CD8-positive, alpha-beta memory T cell (primary cell): ENCODE measurements at regions of chr3 and their contacts with region 1.

Region 1: GRCh38 chr3:111717601-111718000 is 122.5 kb upstream of the ZBED2 start:
- DNase-seq: peak; percentile 43 to 79 (median 55)
- H3K4me3 ChIP-seq: no peak overlapping the region
- H3K4me3 Mint-ChIP-seq: no peak overlapping the region
- H3K27ac ChIP-seq: no peak overlapping the region
- H3K27ac Mint-ChIP-seq: peak overlapping the region in 4 of 8 donors; percentile 77 to 95 (median 78)
- H3K4me1 ChIP-seq: no peaks in the 10 kb centered on the region
- H3K4me1 Mint-ChIP-seq: peaks cover 5 to 15% (median 12%) of the 10 kb centered on the region in 3 donors
- H3K27me3 ChIP-seq: no peaks in the 10 kb centered on the region
- H3K27me3 Mint-ChIP-seq: no peaks in the 10 kb centered on the region

Region 2: GRCh38 chr3:111604119-111604518 is 113.5 kb before region 1 on chr3:
- CTCF ChIA-PET with region 1: no interaction called
- POLR2A ChIA-PET with region 1: no interaction called
- DNase-seq: no peak
- H3K4me3 ChIP-seq: no peak overlapping the region
- H3K4me3 Mint-ChIP-seq: no peak overlapping the region
- H3K27ac ChIP-seq: no peak overlapping the region
- H3K27ac Mint-ChIP-seq: peak overlapping the region; percentile 34 to 93 (median 65)
- H3K4me1 ChIP-seq: peaks cover 19% of the 10 kb centered on the region
- H3K4me1 Mint-ChIP-seq: peaks cover 54 to 77% (median 76%) of the 10 kb centered on the region in 3 donors
- H3K27me3 ChIP-seq: no peaks in the 10 kb centered on the region
- H3K27me3 Mint-ChIP-seq: no peaks in the 10 kb centered on the region

Region 3: GRCh38 chr3:111668912-111669488 is 48.6 kb before region 1 on chr3:
- CTCF ChIA-PET with region 1: interaction called, 56 read pairs
- POLR2A ChIA-PET with region 1: interaction called, 3 read pairs
- DNase-seq: peak in 2 of 5 donors; percentile 53 to 59
- H3K4me3 ChIP-seq: no peak overlapping the region
- H3K4me3 Mint-ChIP-seq: peak overlapping the region in 4 of 7 donors; percentile 3 to 46 (median 13)
- H3K27ac ChIP-seq: no peak overlapping the region
- H3K27ac Mint-ChIP-seq: peak overlapping the region; percentile 46 to 91 (median 72)
- H3K4me1 ChIP-seq: peaks cover 62% of the 10 kb centered on the region
- H3K4me1 Mint-ChIP-seq: peaks cover 65 to 88% (median 82%) of the 10 kb centered on the region in 3 donors
- H3K27me3 ChIP-seq: no peaks in the 10 kb centered on the region
- H3K27me3 Mint-ChIP-seq: no peaks in the 10 kb centered on the region

Region 4: DNA sequence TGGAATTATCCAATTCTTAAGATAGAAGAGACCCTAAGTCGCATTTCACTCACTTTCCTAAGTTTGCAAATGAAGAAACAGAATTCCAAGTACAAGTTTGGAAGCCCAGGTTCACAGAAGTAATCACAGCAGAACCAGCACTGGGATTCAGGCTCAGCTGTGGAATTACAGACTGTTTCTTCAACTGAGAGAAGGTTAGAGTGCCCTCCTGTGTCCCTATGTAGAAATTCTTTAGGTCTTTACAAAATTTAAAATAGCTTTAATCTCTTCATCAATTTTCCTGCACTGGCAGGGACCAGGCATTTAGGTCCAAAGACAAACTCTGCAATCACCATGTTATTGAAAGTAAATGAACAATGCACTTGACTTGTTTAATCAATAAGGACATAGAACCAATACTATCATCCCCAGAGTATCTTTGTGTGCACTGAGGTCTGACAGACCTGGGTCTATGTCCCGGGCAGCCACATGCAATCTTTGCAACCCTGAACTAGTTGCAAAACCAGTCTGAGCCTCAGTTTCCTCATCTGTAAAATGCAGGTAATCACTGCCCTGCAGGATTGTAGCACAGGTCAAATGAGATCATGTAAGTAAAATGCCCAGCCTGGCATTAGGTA is 26.2 kb before region 1 on chr3:
- CTCF ChIA-PET with region 1: interaction called, 15 read pairs
- POLR2A ChIA-PET with region 1: no interaction called
- DNase-seq: peak in 1 of 5 donors; percentile 36
- H3K4me3 ChIP-seq: no peak overlapping the region
- H3K4me3 Mint-ChIP-seq: no peak overlapping the region
- H3K27ac ChIP-seq: no peak overlapping the region
- H3K27ac Mint-ChIP-seq: peak overlapping the region in 3 of 8 donors; percentile 14 to 35 (median 31)
- H3K4me1 ChIP-seq: peaks cover 15% of the 10 kb centered on the region
- H3K4me1 Mint-ChIP-seq: peaks cover 60 to 86% (median 82%) of the 10 kb centered on the region in 3 donors
- H3K27me3 ChIP-seq: no peaks in the 10 kb centered on the region
- H3K27me3 Mint-ChIP-seq: no peaks in the 10 kb centered on the region

Region 5: DNA sequence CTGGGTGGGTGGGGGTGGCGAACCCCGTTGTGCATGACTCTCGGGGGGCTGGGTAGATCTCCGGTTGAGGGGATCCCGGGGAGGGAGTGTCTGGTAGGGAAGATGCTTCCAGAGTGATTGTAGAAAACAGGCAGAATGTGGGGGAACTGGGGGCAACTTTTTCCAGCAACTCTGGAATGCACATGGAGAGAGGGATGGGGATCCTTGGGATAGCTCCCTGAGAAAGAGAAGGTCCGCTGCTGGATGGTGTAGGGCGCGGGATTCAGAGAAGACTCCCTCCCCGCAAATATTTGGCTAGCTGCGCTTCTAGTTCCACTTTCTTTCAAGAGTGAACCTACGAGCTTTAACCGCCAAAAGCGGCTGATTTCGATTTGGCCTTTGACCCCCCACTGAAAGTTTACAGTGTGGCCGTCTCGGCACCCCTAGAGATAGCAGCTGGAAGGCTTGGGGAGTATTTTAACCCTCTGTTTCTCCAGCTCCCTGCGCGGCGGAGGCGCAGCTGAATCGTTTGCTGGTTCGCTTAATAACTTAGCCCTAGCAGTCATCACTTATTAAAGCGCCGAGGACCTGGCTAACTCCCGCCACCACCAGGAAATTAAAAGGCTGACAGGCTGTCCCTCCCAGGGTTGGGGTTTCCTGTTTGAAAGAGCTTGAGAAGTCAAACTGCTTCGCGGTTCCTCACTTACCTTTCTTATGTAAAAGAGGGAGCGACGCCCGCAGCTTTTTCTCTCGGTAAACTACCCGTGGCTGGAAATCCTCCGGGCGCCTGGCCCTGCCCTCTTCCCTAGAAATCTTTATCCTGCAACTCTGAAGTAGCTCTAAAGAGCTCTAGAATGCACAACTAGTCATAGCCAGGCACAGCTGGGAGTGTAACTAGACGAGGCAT is 142.6 kb after region 1 on chr3:
- CTCF ChIA-PET with region 1: interaction called, 42 read pairs
- POLR2A ChIA-PET with region 1: interaction called, 4 read pairs
- DNase-seq: peak; percentile 45 to 78 (median 50)
- H3K4me3 ChIP-seq: peak overlapping the region; percentile 78
- H3K4me3 Mint-ChIP-seq: peak overlapping the region; percentile 94 to 99 (median 97)
- H3K27ac ChIP-seq: peak overlapping the region; percentile 61
- H3K27ac Mint-ChIP-seq: peak overlapping the region; percentile 87 to 96 (median 94)
- H3K4me1 ChIP-seq: peaks cover 6% of the 10 kb centered on the region
- H3K4me1 Mint-ChIP-seq: peaks cover 32 to 42% (median 41%) of the 10 kb centered on the region in 3 donors
- H3K27me3 ChIP-seq: peaks cover 5% of the 10 kb centered on the region
- H3K27me3 Mint-ChIP-seq: peaks cover 0 to 2% of the 10 kb centered on the region in 2 donors

Region 6: DNA sequence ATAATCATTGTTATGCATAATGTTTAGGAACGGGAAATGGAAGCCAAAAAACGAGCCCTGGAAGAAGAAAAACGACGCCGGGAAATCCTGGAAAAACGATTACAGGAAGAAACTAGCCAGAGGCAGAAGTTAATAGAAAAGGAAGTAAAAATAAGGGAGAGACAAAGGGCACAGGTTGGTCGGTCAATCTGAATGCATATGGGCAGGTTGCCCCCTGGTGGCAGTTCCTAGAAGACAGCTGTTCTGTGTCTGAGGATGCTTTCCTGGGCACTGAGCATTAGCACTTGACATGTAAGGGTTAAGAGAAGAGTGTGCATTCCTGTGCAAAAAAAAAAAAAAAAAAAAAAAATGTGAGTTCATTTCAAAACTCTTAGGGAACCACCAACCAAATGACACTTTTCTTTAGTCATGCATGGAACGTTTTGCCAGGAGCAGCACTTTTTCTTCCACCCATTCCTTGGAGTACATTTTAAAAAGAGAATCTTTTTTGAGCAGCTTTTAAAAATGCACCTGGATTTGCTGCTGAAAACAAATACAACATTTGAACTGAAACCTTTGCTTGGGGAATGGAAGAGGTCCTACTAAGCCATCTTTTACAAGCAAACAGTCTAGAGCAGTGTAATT is 250.2 kb after region 1 on chr3:
- CTCF ChIA-PET with region 1: interaction called, 190 read pairs
- POLR2A ChIA-PET with region 1: no interaction called
- DNase-seq: peak; percentile 61 to 84 (median 67)
- H3K4me3 ChIP-seq: no peak overlapping the region
- H3K4me3 Mint-ChIP-seq: no peak overlapping the region
- H3K27ac ChIP-seq: no peak overlapping the region
- H3K27ac Mint-ChIP-seq: peak overlapping the region in 3 of 8 donors; percentile 7 to 8 (median 7)
- H3K4me1 ChIP-seq: peaks cover 3% of the 10 kb centered on the region
- H3K4me1 Mint-ChIP-seq: peaks cover 3 to 9% (median 4%) of the 10 kb centered on the region in 3 donors
- H3K27me3 ChIP-seq: no peaks in the 10 kb centered on the region
- H3K27me3 Mint-ChIP-seq: no peaks in the 10 kb centered on the region

Region 7: DNA sequence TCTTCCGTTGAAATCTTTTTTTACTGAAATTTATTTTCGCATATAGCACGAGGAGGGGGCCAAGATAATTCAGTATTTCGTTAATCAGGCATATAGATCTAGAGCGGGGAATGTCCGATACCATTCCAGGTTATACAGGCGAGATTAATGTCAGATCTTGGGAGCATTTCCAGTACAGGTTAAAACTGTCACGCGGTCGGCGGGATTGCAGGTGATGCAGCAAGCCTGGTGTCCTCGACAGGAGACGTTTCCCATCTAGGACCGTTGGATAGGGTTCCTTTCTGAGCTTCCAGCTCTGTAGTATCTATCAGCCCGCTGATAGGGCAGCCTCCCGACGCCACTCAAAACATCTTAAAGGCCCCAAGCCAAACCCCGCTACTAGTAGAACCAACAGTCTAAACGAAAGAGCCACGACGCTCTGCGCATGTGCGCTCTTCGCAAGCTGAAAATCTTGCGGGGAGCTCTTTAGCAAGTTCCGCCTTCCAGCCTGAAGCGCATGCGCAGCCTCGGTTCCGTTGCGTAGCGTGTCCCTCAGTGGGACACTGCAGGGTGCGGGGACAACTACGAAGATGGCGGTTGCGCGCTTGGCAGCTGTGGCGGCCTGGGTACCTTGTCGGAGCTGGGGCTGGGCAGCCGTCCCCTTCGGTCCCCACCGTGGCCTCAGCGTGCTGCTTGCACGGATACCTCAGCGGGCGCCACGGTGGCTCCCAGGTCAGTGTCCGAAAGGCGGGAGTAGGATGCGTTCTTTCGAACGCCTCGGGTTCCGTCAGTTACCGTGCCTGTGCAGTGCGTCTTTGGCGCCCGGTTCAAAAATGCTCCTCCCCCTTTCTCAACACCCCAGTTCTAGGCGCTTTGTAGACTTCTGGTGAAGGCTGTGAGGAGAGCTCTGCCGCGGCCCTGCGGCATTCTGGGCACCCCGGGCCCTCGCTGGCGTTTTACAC is 261.2 kb after region 1 on chr3 and contains the start of gene ABHD10:
- CTCF ChIA-PET with region 1: interaction called, 20 read pairs
- POLR2A ChIA-PET with region 1: interaction called, 4 read pairs
- DNase-seq: peak; percentile 92 to 99 (median 95)
- H3K4me3 ChIP-seq: peak within 1 kb of the TSS; percentile 97
- H3K4me3 Mint-ChIP-seq: peak within 1 kb of the TSS; percentile 90 to 98 (median 93)
- H3K27ac ChIP-seq: peak within 1 kb of the TSS; percentile 87
- H3K27ac Mint-ChIP-seq: peak within 1 kb of the TSS; percentile 88 to 96 (median 92)
- H3K4me1 ChIP-seq: peaks cover 31% of the 10 kb centered on the region
- H3K4me1 Mint-ChIP-seq: peaks cover 41 to 51% (median 46%) of the 10 kb centered on the region in 3 donors
- H3K27me3 ChIP-seq: no peaks in the 10 kb centered on the region
- H3K27me3 Mint-ChIP-seq: peaks cover 0 to 2% of the 10 kb centered on the region in 2 donors
- total RNA-seq, gene ABHD10: 43.1 to 44.1 TPM

Region 8: DNA sequence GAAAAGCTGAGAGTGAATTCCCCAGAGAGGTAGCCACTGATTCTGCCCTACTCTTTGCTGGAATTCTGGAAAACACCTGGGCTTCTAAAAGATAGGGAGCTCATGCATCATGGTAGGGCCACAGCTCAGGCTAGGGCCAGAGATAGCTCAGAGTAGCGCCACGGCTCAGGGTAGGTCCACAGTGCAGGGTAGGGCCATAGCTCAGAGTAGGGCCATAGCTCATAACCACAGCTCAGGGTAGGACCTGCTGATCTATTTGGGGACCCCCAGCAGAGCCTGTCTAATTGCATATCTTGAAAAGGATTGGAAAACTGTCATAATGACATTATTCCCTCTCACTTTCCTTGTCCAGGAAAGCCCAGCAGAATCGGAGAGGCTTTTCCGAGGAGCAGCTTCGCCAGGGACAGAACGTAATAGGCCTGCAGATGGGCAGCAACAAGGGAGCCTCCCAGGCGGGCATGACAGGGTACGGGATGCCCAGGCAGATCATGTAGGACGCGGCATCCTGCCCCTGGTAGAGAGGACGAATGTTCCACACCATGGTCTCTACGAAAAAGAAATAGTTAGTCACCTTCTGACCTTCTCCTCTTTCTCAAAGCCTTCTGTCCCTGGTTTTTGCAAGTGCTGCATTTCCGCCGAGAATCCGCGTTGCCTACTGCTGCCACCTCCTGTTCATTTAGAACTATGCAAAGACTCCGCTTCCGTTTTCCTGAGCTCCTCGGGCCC is 295.6 kb after region 1 on chr3:
- CTCF ChIA-PET with region 1: interaction called, 53 read pairs
- POLR2A ChIA-PET with region 1: interaction called, 3 read pairs
- DNase-seq: peak; percentile 15 to 57 (median 41)
- H3K4me3 ChIP-seq: no peak overlapping the region
- H3K4me3 Mint-ChIP-seq: peak overlapping the region in 4 of 7 donors; percentile 21 to 67 (median 36)
- H3K27ac ChIP-seq: no peak overlapping the region
- H3K27ac Mint-ChIP-seq: peak overlapping the region in 2 of 8 donors; percentile 20 to 76
- H3K4me1 ChIP-seq: peaks cover 5% of the 10 kb centered on the region
- H3K4me1 Mint-ChIP-seq: peaks cover 5 to 19% (median 11%) of the 10 kb centered on the region in 3 donors
- H3K27me3 ChIP-seq: no peaks in the 10 kb centered on the region
- H3K27me3 Mint-ChIP-seq: peaks cover 0 to 1% of the 10 kb centered on the region in 2 donors